Activated T-helper 2 cell treated with anti-CD3 and anti-CD28 coated beads, Interferon-gamma antibody, Interleukin-2, Interleukin-4, amounts not matched to agents 10 μg/mL and 5 μg/mL and 100 μg/mL, durations not matched to agents 14 hours and 24 hours and 36 hours (primary cell): ENCODE measurements at regions of chr7 and their contacts with region 1.

Region 1: GRCh38 chr7:23474094-23474828 is 4.0 kb upstream of the IGF2BP3 start:
- DNase-seq: peak; percentile 94
- H3K4me3 Mint-ChIP-seq: peak overlapping the region; percentile 85
- H3K27ac Mint-ChIP-seq: peak overlapping the region; percentile 65
- H3K4me1 Mint-ChIP-seq: peaks cover 35% of the 10 kb centered on the region
- H3K27me3 Mint-ChIP-seq: peaks cover 35% of the 10 kb centered on the region

Region 2: DNA sequence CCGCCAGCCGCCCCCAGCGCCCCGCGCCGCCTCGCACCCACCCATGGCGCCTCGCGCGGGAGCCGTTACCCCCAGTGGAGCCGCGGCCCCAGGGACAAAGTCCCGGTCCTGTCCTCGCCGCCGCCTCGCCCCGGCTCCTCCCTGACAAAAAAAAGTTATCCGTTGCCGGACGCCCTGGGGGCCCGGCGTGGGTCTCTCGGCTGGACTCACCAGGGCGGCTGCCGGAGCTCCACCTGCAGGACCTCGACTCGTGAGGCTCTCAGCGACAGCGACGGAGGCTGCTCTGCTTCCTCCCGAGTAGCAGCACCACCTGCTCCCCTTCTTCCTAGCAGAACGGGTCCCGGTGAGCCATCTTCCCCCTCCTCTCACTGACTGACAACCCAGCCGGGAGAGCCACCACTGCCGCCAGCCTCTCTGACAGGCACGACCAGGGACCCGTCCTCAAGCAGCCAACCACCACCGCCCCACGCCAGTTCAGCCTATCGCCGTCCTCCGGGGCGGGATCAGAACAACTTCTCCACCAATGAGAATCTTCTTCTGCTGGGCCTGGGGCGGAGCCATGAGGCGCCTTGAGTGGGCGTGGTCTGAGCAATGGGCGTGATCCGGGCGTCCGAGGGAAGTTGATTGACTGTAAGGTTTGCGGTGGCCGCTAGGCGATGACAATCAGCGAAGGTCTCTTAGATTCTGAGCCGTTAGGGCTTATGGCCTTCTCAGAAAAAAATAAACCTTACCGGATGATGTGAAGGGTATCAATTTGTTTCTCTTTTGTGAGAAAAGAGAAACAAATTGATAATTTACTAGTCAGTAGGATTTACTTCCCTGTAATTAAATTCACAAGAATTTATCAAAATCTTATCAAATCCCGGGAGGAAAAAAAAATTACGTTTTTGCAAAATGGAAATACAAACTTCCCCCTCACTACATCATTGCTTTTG is 460.3 kb before region 1 on chr7 and contains the start of gene HYCC1:
- intact Hi-C with region 1: loop called (anchors 10 kb)
- DNase-seq: peak; percentile 99
- H3K4me3 Mint-ChIP-seq: peak within 1 kb of the TSS; percentile 89
- H3K27ac Mint-ChIP-seq: peak within 1 kb of the TSS; percentile 85
- H3K4me1 Mint-ChIP-seq: peaks cover 33% of the 10 kb centered on the region
- H3K27me3 Mint-ChIP-seq: no peaks in the 10 kb centered on the region
- total RNA-seq, gene HYCC1: 49.9 and 55.1 TPM in 2 replicates

Region 3: DNA sequence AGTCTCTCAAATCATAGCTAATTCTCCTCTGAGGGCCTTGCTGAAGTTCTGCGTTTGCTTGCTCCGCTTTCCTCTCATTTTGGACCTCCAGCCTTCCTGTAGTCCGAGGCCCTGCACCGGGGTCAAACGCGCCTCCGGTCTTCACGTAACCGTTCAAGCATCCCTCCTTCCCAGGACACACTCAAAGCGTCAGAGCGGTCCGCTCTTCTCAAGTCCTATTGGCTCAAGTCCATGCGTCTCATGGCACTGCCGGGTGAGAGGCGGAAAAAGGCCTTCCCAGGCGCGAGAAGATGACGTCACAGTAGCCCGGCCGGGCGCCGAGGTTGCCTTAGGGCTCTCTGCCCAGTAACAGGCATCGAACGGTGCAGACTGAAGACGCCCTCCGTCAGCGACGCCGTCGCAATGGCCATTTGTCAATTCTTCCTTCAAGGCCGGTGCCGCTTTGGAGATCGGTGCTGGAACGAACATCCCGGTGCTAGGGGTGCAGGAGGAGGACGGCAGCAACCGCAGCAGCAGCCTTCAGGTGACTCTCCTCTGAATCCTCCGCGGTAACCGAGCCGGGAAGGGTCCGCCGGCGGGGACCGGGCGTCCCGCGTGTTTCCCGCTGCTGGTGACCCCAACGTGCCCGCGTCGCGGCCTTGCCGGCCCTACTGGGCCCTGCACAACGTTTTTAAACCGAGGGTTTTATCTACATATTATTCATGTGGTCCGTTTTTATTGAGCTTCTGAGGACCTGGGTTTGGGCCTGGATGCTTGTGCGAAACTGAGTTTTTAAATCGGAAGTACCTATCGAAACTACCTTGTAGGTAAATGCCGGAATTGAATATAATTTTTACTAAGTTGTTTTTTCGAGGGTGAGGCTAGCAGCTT is 292.3 kb before region 1 on chr7 and contains the start of gene NUP42:
- intact Hi-C with region 1: loop called (anchors 5 kb)
- DNase-seq: peak; percentile 97
- H3K4me3 Mint-ChIP-seq: peak within 1 kb of the TSS; percentile 89
- H3K27ac Mint-ChIP-seq: peak within 1 kb of the TSS; percentile 98
- H3K4me1 Mint-ChIP-seq: peaks cover 33% of the 10 kb centered on the region
- H3K27me3 Mint-ChIP-seq: peaks cover 7% of the 10 kb centered on the region
- total RNA-seq, gene NUP42: 52.2 and 54.0 TPM in 2 replicates

Region 4: DNA sequence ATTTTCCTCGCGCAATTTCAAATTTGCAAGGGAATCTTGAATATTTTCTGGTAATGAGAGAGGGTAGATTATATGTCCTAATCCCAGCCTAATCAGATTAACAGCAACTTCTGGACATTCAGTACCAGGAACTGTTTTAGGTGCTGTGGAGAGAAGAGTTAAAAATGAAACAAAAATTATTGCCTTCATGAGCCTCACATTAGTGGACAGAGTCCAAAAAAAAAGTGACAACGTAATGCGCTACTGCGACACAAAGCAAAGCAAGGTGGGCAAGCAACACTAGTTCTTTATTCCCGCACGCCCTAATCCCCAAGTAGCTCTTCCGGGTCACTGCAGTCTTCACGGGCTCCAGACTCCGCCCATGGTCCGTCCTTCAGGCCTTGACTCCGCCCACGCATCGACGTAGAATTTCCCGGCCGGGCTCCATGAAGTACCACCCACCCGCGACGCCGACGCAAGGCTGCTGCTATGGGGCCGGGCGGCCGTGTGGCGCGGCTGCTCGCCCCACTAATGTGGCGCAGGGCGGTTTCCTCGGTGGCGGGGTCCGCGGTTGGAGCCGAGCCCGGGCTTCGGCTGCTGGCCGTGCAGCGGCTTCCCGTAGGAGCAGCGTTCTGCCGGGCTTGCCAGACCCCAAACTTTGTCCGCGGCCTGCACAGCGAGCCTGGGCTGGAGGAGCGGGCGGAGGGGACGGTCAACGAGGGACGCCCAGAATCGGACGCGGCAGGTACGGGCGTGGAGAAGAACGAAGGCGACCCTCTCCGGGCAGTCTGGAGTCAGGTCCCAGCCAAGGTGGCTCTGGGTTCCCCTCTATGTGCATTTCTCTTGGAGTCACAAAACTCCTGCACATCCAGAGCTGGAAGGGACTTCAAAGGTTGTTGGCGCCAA is 175.1 kb before region 1 on chr7 and contains the start of gene MALSU1:
- intact Hi-C with region 1: loop called (anchors 2 kb)
- DNase-seq: peak; percentile 93
- H3K4me3 Mint-ChIP-seq: peak within 1 kb of the TSS; percentile 86
- H3K27ac Mint-ChIP-seq: peak within 1 kb of the TSS; percentile 92
- H3K4me1 Mint-ChIP-seq: peaks cover 32% of the 10 kb centered on the region
- H3K27me3 Mint-ChIP-seq: no peaks in the 10 kb centered on the region
- total RNA-seq, gene MALSU1: 83.6 and 89.0 TPM in 2 replicates

Region 5: DNA sequence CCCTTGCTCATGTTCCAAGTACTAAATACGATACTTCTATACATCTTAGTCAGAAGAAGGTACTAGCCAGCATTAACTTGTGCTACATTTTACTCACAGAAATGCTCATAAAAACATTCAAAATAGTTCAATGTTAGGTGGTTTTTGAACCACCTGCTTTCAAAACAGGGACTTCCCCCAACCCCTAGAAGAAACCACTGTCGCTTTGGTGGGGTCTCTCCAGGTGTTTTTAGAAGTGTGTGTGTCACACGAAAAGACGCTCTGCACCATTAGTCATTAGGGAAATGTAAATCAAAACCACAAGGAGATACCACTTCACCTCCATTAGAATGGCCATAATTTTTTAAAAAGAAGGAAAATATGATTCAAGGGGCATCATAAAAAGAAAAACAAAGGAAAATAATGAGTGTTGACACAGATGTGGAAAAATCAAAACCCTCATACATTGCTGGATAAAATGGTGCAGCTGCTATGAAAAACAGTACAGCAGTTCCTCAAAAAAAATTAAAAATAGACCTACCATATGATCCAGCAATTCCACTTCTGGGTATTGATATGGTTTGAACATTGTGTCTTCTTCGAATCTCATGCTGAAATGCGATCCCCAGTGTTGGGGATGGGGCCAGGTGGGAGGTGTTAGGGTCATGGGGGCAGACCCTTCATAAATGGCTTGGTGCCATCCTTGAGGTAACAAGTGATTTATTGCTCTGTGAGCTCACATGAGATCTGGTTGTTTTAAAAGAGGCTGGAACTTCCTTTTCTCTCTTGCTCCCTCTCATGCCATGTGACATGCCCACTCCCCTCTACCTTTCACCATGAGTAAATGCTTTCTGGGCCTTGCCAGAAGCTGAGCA is 100.9 kb before region 1 on chr7:
- intact Hi-C with region 1: loop called (anchors 1 kb)
- DNase-seq: peak; percentile 28
- H3K4me3 Mint-ChIP-seq: no peak overlapping the region
- H3K27ac Mint-ChIP-seq: peak overlapping the region; percentile 83
- H3K4me1 Mint-ChIP-seq: peaks cover 57% of the 10 kb centered on the region
- H3K27me3 Mint-ChIP-seq: no peaks in the 10 kb centered on the region

Region 6: GRCh38 chr7:23431702-23432199 is 42.5 kb before region 1 on chr7:
- intact Hi-C with region 1: loop called (anchors 2 kb)
- DNase-seq: no peak
- H3K4me3 Mint-ChIP-seq: no peak overlapping the region
- H3K27ac Mint-ChIP-seq: no peak overlapping the region
- H3K4me1 Mint-ChIP-seq: peaks cover 44% of the 10 kb centered on the region
- H3K27me3 Mint-ChIP-seq: no peaks in the 10 kb centered on the region

Region 7: GRCh38 chr7:23462846-23463245 is 11.4 kb before region 1 on chr7:
- intact Hi-C with region 1: no loop called
- DNase-seq: no peak
- H3K4me3 Mint-ChIP-seq: no peak overlapping the region
- H3K27ac Mint-ChIP-seq: no peak overlapping the region
- H3K4me1 Mint-ChIP-seq: peaks cover 49% of the 10 kb centered on the region
- H3K27me3 Mint-ChIP-seq: peaks cover 24% of the 10 kb centered on the region